ENCODE measurements at regions of chr2 and their contacts with region 1.

Region 1: GRCh38 chr2:10832203-10832936 is 19.8 kb upstream of the PDIA6 start:
- DNase-seq: peak; percentile 83 to 92 (median 90)
- H3K4me3 ChIP-seq: no peak overlapping the region
- H3K27ac ChIP-seq: no peak overlapping the region
- H3K4me1 ChIP-seq: peaks cover 0 to 10% (median 5%) of the 10 kb centered on the region in 4 experiments
- H3K27me3 ChIP-seq: peaks cover 0 to 35% (median 9%) of the 10 kb centered on the region in 5 experiments

Region 2: GRCh38 chr2:10654069-10654468 is 178.3 kb before region 1 on chr2:
- CTCF ChIA-PET with region 1: no interaction called
- POLR2A ChIA-PET with region 1: no interaction called
- DNase-seq: no peak
- H3K4me3 ChIP-seq: no peak overlapping the region
- H3K27ac ChIP-seq: no peak overlapping the region
- H3K4me1 ChIP-seq: no peaks in the 10 kb centered on the region
- H3K27me3 ChIP-seq: no peaks in the 10 kb centered on the region

Region 3: DNA sequence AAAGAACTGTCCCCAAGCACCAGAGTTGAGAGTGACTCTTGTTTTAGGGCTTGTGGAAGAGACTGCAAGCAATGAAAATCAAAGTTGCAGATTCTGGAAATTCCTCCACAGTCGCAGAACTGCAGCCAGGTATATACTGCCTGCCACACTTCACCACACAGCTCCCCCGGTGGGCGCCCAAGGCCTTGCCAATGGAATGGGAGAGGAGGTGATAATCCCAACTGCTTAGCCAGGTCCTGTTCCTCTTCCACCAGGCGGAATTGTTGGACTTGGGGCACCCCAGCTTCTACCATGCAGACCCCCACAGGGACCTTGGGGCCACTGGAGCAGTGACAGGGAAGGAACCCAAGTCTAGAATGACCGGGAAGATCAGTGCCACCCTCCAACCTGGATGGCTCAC is 15.0 kb before region 1 on chr2:
- CTCF ChIA-PET with region 1: interaction called, 31 read pairs
- POLR2A ChIA-PET with region 1: interaction called, 3 read pairs
- DNase-seq: no peak
- H3K4me3 ChIP-seq: no peak overlapping the region
- H3K27ac ChIP-seq: no peak overlapping the region
- H3K4me1 ChIP-seq: peaks cover 0 to 4% (median 2%) of the 10 kb centered on the region in 4 experiments
- H3K27me3 ChIP-seq: peaks cover 0 to 4% (median 0%) of the 10 kb centered on the region in 5 experiments

Region 4: DNA sequence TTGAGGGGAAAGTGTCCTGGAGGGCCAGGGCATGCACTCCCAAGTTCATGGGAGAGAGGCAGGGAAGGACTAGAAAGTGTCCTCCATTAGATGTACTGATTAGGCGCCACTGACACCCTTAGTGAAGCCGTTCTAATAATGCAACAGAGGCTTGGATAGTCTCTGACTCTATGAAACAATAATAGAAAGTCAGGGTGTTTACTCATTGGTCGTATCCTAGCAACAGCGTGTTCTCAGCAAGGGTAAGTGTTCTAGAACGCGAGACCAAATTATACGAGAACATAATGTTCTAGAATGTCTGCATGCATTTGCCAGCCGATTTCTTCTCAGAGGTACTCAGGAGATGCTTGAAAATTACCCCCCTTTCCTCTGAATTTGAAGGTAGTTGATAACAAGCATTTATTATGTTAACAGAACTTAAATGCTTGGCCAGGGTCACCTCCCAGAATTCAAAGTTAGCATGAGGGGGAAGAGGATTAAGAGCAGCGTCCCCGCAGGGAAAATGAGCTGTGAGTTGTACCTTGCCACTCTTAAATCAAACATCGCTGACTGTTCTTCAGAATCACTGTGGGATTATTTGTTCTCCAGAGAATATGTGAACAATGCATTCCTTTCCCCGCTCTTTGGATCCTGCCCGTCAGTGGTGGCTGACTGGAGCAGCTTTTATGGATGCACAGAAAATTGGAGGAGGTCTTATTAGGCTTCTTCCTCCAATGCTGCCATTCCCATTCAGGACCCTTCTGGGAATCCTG is 13.9 kb after region 1 on chr2:
- CTCF ChIA-PET with region 1: interaction called, 10 read pairs
- POLR2A ChIA-PET with region 1: no interaction called
- DNase-seq: no peak
- H3K4me3 ChIP-seq: no peak overlapping the region
- H3K27ac ChIP-seq: no peak overlapping the region
- H3K4me1 ChIP-seq: no peaks in the 10 kb centered on the region
- H3K27me3 ChIP-seq: peaks cover 0 to 9% (median 2%) of the 10 kb centered on the region in 5 experiments

Region 5: GRCh38 chr2:10900216-10901109 is 68.1 kb after region 1 on chr2:
- CTCF ChIA-PET with region 1: interaction called, 13 read pairs
- POLR2A ChIA-PET with region 1: no interaction called
- DNase-seq: peak; percentile 26 to 72 (median 62)
- H3K4me3 ChIP-seq: no peak overlapping the region
- H3K27ac ChIP-seq: no peak overlapping the region
- H3K4me1 ChIP-seq: no peaks in the 10 kb centered on the region
- H3K27me3 ChIP-seq: peaks cover 0 to 2% (median 0%) of the 10 kb centered on the region in 5 experiments

Region 6: GRCh38 chr2:11124503-11125068 is 292.2 kb after region 1 on chr2:
- CTCF ChIA-PET with region 1: interaction called, 29 read pairs
- POLR2A ChIA-PET with region 1: no interaction called
- DNase-seq: peak; percentile 36 to 60 (median 54)
- H3K4me3 ChIP-seq: no peak overlapping the region
- H3K27ac ChIP-seq: no peak overlapping the region
- H3K4me1 ChIP-seq: peaks cover 0 to 16% (median 7%) of the 10 kb centered on the region in 4 experiments
- H3K27me3 ChIP-seq: no peaks in the 10 kb centered on the region